ENCODE measurements at regions of chr20 and their contacts with region 1.

Region 1: GRCh38 chr20:16479698-16480097 is 93.5 kb downstream of the KIF16B start:
- DNase-seq: no peak

Region 2: DNA sequence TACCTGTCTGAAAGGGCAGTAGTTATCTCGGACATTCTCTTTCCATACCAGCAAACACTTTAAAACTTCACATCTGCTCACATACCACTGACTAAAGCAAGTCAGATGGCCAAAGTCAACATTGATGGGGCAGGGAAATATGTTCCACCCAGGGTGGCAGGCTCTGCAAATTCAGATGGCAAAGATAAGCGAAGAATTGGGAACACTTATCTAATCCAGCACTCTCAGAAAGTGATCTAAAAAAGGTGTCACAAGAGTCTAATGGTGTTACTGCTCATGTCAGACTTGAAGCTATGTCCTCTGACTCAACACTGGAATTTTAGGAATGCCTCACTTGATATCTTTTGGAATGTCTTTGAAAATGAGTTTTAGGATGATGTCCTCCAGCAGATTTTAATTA is 992.7 kb before region 1 on chr20:
- intact Hi-C with region 1: loop called in 1 of 2 experiments (anchors 5 kb)
- DNase-seq: no peak

Region 3: GRCh38 chr20:16222859-16223411 is 256.8 kb before region 1 on chr20:
- intact Hi-C with region 1: no loop called
- DNase-seq: no peak

Region 4: GRCh38 chr20:16551633-16552414 is 72.1 kb after region 1 on chr20:
- intact Hi-C with region 1: no loop called
- DNase-seq: no peak

Measured in posterior vena cava (tissue), 2 donors.